ENCODE measurements at regions of chr2 and their contacts with region 1.

Region 1: DNA sequence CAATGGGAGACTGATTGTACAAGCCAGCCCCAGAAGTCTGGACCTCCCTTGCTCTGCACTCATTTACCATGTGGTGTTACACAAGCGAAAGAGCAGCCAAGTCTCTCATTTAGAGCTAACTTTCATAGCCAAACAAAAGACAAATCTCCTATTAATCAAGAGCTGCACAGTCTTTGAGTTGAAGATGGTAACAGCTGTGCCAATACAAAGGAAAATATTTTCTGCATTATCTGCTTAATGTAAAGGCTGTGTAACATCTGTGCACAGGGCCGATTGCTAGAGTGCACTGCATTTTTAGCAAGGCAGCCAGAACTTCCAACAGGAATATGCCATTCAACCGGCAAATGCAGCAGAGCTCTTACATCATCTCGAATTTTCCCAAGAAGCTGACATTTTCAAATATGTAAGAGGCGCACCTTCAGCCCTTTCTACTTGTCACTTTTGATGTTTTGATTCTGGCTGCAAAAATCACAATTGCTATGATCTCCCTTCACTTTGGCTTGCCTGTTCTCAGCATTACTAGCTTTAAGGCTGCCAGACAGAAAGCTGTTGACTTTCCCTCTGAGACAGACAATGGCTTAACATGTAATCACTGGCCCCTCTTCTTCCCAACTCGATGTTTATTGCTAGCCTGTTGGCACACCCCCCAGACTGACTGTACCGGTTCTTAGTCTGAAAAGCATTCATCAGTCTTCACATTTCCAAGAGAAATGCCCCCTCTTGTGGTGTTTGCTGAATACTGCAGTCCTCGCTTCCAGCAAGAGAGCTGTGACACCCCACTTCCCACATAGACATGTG is 96.9 kb upstream of the TANK start:
- DNase-seq: peak; percentile 86
- H3K4me3 Mint-ChIP-seq: no peak overlapping the region
- H3K27ac Mint-ChIP-seq: no peak overlapping the region
- H3K4me1 Mint-ChIP-seq: peaks cover 6% of the 10 kb centered on the region
- H3K27me3 Mint-ChIP-seq: no peaks in the 10 kb centered on the region
- CTCF ChIP-seq: peak; percentile 86

Region 2: DNA sequence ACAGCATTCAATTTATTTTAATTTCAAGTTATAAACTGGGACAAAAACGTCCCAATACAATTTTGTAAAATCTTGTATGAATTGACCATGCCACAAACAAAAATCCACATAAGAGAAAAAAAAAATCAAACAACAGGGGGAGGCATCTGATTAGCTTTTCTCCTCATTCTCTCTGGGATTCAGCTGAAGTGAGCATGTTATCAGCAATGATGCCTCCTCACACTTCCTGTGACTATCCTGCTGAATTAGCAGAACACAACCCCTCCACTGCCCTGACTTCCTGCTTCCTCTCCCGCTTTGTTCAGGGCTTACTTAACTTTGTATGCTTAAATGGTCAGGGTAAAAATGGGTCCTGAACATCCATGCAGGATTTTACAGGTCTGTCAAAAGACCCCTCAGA is 731.0 kb before region 1 on chr2:
- CTCF ChIA-PET with region 1: interaction called, 3 read pairs
- POLR2A ChIA-PET with region 1: no interaction called
- intact Hi-C with region 1: loop called (anchors 10 kb)
- DNase-seq: no peak
- H3K4me3 Mint-ChIP-seq: no peak overlapping the region
- H3K27ac Mint-ChIP-seq: peak overlapping the region; percentile 42
- H3K4me1 Mint-ChIP-seq: peaks cover 46% of the 10 kb centered on the region
- H3K27me3 Mint-ChIP-seq: no peaks in the 10 kb centered on the region
- CTCF ChIP-seq: no peak

Region 3: DNA sequence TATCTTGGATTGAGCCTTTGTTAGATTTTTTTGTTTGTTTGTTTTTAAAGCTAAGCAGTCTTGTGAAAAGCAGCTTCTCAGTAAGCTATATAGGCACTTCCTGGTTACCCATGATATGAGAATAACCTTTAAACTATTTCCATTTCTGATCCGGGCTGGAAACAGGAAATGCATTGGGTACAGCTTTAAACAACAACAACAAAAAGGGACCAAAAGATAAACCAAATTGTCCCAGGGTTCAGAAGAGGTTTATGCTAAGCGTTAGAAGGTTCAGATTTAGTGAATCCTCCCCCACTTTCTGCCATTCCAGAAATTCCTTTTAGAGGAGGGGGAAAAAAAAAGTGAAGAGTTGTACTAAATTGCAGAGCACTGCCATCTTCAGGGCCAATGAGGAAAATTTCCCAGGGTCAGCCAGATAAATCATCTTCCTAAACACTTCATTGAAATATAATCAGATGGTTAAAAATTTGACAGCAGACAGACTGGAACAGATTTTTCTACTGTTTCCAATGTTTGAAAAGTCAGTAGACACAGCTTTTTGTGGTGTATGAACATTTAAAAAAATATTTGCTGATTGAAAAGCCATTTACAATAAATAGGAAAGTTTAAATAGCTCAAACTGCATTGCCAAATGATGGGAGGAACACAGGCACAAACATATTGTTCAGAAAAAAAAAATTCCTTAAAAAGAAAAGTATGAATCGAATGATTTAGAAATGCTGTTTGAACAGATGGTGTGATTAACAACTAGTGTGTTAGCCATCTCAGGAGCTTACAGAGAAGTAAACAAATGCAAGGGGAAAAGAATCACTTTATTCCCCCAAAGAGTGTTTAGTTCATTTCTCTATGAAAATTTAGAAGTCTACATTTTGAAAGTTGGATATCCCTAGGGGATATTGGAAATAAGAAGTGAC is 93.0 kb before region 1 on chr2:
- CTCF ChIA-PET with region 1: interaction called, 16 read pairs
- POLR2A ChIA-PET with region 1: no interaction called
- intact Hi-C with region 1: no loop called
- DNase-seq: peak; percentile 77
- H3K4me3 Mint-ChIP-seq: no peak overlapping the region
- H3K27ac Mint-ChIP-seq: peak overlapping the region; percentile 86
- H3K4me1 Mint-ChIP-seq: peaks cover 15% of the 10 kb centered on the region
- H3K27me3 Mint-ChIP-seq: no peaks in the 10 kb centered on the region
- CTCF ChIP-seq: peak; percentile 83

Region 4: GRCh38 chr2:161019311-161019710 is 44.0 kb before region 1 on chr2:
- CTCF ChIA-PET with region 1: interaction called, 12 read pairs
- POLR2A ChIA-PET with region 1: no interaction called
- intact Hi-C with region 1: no loop called
- DNase-seq: no peak
- H3K4me3 Mint-ChIP-seq: no peak overlapping the region
- H3K27ac Mint-ChIP-seq: no peak overlapping the region
- H3K4me1 Mint-ChIP-seq: no peaks in the 10 kb centered on the region
- H3K27me3 Mint-ChIP-seq: no peaks in the 10 kb centered on the region
- CTCF ChIP-seq: no peak

Region 5: DNA sequence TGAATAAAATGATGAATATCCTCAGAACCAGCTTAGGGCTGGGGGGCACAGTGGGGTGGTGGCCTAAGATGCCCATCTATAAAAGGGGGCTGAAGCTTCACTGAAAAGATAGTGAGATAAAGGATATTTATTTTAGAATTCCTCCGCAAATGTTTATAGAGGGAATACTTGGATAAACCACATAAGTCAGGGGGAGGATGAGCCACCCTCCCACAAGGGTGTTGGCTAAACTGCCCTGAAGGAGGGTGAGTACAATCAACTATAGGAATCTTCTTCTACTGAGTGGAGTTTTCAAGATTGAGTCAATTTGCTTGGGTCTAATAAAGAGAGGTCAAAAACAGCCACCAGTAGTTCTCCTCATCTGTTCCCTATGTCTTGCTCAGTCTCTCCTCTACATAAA is 17.6 kb before region 1 on chr2:
- CTCF ChIA-PET with region 1: interaction called, 18 read pairs
- POLR2A ChIA-PET with region 1: no interaction called
- intact Hi-C with region 1: no loop called
- DNase-seq: no peak
- H3K4me3 Mint-ChIP-seq: no peak overlapping the region
- H3K27ac Mint-ChIP-seq: peak overlapping the region; percentile 26
- H3K4me1 Mint-ChIP-seq: peaks cover 6% of the 10 kb centered on the region
- H3K27me3 Mint-ChIP-seq: peaks cover 8% of the 10 kb centered on the region
- CTCF ChIP-seq: no peak

Region 6: DNA sequence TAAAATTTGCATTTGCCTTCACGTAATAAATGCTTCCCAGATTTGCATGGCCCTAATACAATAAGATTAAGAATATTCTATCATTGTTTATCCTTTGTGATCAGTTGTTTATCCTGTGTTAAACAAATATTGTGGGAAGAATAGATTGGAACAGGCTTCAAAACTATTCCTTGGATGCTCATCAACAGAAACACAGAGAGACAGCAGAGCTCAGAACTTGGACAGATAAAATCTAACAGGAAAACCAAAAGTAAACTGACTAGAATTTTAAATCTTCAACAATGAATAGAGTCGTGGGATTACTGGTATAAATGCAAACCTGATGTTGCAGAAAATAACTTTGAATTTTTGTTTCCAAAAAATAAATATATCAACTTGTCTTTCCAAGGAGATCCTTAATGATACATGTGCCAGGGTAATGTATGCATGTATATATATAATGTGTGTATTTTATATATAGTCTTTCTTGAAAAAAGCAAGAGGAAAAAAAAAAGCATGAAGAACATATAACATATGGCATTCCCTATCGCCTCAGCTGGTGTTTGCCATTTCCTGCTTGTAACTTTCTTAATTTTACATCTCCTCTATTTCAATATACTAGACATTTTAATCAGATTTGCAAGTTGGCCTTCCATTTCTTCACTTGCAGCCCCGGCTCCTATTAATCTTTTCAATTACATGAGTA is 37.0 kb after region 1 on chr2:
- CTCF ChIA-PET with region 1: interaction called, 11 read pairs
- POLR2A ChIA-PET with region 1: no interaction called
- intact Hi-C with region 1: no loop called
- DNase-seq: no peak
- H3K4me3 Mint-ChIP-seq: no peak overlapping the region
- H3K27ac Mint-ChIP-seq: no peak overlapping the region
- H3K4me1 Mint-ChIP-seq: peaks cover 38% of the 10 kb centered on the region
- H3K27me3 Mint-ChIP-seq: no peaks in the 10 kb centered on the region
- CTCF ChIP-seq: no peak

Region 7: DNA sequence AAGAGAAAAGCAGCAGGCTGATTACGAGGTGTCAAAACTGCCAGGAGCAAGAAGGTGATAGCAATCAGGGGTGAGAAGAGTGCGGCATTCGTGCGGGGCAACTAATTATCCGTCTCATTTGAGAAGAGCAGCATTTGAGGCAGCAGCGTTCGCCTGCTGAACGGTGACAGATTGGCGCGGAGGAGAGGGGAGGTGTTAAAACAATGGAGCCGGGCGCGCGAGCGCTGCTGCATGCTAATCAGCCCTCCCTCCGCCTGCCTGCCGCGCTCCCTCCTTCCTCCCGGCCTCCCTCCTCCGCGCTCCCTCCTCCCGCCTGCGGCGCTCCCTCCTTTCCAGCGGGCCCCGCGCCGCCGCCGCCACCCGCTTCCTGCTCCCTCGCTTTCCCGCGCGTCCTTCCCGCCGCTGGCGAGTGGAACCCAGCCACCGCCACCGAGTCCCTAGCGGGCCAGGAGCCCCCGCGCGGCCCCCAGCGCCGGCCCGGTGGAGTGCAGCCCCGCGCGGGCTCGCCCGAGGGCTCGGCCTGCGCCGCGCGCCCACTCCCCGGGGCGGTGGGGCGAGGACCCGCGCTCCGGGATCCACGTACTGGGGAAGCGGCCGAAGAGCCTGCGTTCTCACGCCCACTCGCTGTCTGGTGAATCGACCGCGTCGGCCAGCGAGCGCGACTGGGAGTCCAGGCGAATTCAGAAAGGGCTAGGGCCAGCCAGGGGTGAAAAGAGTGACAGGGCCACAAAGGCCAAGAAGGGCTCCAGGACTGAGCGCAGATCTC is 175.4 kb after region 1 on chr2:
- CTCF ChIA-PET with region 1: no interaction called
- POLR2A ChIA-PET with region 1: no interaction called
- intact Hi-C with region 1: no loop called
- DNase-seq: peak; percentile 40
- H3K4me3 Mint-ChIP-seq: peak overlapping the region; percentile 71
- H3K27ac Mint-ChIP-seq: no peak overlapping the region
- H3K4me1 Mint-ChIP-seq: peaks cover 8% of the 10 kb centered on the region
- H3K27me3 Mint-ChIP-seq: no peaks in the 10 kb centered on the region
- CTCF ChIP-seq: no peak